H1 (cell line): ENCODE measurements at regions of chr22 and their contacts with region 1.

Region 1: GRCh38 chr22:28051787-28052356 is 132.8 kb upstream of the PITPNB start:
- DNase-seq: peak; percentile 44 to 92
- H3K4me3 ChIP-seq: no peak overlapping the region
- H3K27ac ChIP-seq: no peak overlapping the region
- H3K4me1 ChIP-seq: peaks cover 0 to 5% (median 1%) of the 10 kb centered on the region in 4 experiments; a peak in 2 of 7 replicates
- H3K27me3 ChIP-seq: no peaks in the 10 kb centered on the region
- CTCF ChIP-seq: peak; percentile 81 to 84 (median 82)
- EP300 ChIP-seq: no peak
- POLR2A ChIP-seq: no peak
- RAD21 ChIP-seq: peak; percentile 93 to 96

Region 2: DNA sequence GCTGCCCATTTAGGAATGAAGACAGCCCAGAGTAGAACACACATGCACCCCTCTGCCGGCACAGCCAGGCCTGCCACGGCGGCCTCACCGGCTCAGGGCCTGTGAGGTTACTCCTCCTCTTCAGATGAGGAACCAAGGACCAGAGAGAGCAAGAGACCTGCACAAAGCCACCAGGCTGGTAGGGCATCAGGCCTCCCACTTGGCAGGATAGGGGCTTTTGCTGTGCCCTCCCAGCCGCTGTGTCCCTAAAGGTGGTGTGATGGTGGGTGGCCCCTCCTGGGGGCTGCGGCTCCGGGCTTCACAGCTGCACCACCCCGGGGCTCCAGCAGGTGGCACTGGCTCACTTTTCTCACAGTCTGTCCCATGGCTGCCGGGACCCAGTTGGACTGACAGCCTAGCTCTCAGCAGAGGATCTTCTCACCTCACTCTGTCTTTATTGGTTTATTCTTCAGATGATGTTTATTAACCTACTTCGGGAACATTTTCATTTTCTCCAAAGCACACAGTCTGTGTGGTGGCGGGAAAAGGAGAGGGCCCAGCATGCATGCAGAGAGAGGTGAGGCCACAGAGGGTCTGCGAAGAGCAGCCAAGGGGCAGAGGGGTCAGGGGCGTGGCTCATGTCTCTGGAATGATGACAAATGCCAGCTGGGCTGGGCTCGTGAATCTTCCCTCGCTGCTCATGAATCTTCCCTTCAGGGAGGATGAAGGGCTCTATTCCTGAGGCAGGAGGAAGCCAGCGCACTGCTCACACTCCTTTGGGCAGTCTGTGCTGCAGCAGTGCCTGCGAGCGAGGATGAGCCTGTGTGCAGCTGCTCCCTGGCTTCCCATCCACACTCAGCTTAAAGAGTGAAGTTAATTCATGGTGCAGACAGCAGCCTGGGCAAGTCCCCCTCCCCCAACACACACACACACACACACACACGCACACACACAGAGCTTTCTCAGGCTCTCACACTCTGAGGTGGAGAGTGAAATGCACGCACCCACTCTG is 31.7 kb before region 1 on chr22:
- CTCF ChIA-PET with region 1: interaction called, 48 read pairs
- POLR2A ChIA-PET with region 1: no interaction called
- DNase-seq: peak; percentile 34 to 97
- H3K4me3 ChIP-seq: no peak overlapping the region
- H3K27ac ChIP-seq: no peak overlapping the region
- H3K4me1 ChIP-seq: peaks cover 0 to 6% (median under 1%) of the 10 kb centered on the region in 4 experiments; a peak in 3 of 7 replicates
- H3K27me3 ChIP-seq: no peaks in the 10 kb centered on the region
- CTCF ChIP-seq: peak; percentile 85 to 92 (median 88)
- EP300 ChIP-seq: no peak
- POLR2A ChIP-seq: no peak
- RAD21 ChIP-seq: peak; percentile 87 to 93

Region 3: DNA sequence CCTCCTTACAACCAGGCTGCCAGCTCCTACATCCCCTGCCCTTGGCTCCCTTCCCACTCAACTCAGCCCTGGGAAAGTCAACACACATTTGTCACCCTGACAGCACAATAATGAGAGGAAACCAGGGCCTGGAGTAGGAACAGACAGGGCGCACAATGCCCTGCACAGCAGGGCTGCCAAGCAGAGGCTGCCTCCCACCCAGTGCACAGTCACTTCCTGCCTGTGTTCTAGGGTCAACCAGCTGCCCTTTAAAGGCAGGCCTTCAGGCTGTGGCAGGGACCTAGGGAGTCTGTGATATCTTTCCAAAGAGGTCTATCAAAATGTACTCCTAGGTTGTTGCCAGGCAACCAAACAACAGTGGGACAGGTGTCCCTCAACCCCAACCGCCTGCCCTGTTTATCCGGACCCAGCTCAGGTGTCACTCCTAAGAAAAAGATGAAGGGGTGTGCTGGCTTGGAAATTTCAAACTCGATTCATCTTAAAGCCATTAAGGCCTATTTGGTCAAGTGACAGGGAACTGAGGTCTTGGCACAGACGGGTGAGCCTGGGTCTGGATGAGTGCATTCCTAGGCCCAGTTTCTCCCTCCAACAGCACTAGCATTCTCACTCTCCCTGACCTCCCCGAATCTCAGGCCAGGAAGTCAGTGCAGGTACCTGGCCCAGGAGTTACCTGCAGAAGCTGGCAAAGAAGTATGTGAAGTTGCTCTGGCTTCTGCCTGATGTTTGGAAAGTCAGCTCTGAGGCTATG is 22.5 kb before region 1 on chr22:
- CTCF ChIA-PET with region 1: interaction called, 13 read pairs
- POLR2A ChIA-PET with region 1: no interaction called
- DNase-seq: peak in 1 of 2 experiments; percentile 30
- H3K4me3 ChIP-seq: no peak overlapping the region
- H3K27ac ChIP-seq: no peak overlapping the region
- H3K4me1 ChIP-seq: no peaks in the 10 kb centered on the region
- H3K27me3 ChIP-seq: no peaks in the 10 kb centered on the region
- CTCF ChIP-seq: no peak
- EP300 ChIP-seq: no peak
- POLR2A ChIP-seq: no peak
- RAD21 ChIP-seq: no peak

Region 4: DNA sequence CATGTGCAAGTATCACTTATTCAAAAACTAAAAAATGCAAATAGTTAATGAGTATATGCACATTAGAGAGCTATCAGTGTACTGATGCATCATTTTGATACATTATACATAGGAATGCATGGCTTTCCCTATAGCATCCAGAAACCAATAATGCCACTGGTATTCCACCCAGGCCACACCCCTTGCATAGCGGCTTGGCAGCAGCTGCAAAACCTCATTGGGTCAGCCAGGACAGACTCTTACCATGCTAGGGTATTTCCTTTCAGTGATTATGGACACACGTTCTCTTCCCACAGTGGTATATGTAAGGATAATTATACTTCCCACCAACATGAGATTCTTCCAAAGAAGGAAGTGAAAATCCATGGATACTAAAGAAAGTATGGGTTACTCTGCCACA is 13.0 kb after region 1 on chr22:
- CTCF ChIA-PET with region 1: interaction called, 21 read pairs
- POLR2A ChIA-PET with region 1: no interaction called
- DNase-seq: no peak
- H3K4me3 ChIP-seq: no peak overlapping the region
- H3K27ac ChIP-seq: no peak overlapping the region
- H3K4me1 ChIP-seq: no peaks in the 10 kb centered on the region
- H3K27me3 ChIP-seq: no peaks in the 10 kb centered on the region
- CTCF ChIP-seq: no peak
- EP300 ChIP-seq: no peak
- POLR2A ChIP-seq: no peak
- RAD21 ChIP-seq: no peak

Region 5: DNA sequence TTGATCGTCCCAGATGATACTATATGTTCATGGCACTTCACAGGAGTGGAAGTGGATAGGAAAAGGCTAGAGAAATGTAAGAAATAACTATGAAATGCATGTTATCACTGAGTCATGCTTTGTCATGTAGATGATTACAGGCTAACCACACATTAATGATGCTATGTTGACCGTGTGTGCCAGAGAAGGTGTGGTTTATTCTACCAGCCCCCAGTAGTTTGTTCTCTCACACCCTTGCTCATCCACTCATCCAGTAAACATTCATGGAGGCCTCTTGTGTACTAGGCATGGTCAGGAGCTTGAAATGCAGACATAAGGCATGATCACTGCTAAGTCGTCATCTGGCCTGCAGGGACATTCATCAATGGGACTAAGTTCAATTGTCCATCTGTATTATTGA is 20.2 kb after region 1 on chr22:
- CTCF ChIA-PET with region 1: interaction called, 11 read pairs
- POLR2A ChIA-PET with region 1: no interaction called
- DNase-seq: no peak
- H3K4me3 ChIP-seq: no peak overlapping the region
- H3K27ac ChIP-seq: no peak overlapping the region
- H3K4me1 ChIP-seq: no peaks in the 10 kb centered on the region
- H3K27me3 ChIP-seq: no peaks in the 10 kb centered on the region
- CTCF ChIP-seq: no peak
- EP300 ChIP-seq: no peak
- POLR2A ChIP-seq: no peak
- RAD21 ChIP-seq: no peak

Region 6: DNA sequence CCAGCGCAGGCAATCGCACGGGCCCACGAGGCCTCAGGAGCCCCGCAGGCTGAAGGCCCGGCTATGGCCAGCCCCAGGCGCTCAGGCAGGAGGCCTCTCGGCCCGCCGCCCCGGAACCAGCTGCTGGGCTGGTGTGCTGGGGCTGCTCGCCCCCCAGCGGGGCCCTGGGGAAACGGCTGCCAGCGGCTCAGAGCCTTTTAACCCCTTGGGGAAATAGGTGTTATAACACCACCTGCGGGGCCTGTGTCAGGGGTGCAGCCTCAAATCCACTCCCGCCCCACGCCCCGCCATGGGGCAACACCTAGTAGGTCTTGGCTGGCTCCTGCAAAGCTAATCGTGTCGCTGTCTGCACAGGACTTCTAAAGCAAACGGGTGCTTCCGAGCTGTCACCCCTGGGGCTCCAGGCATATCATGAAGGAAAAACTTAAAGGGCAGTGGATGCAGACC is 390.4 kb after region 1 on chr22:
- CTCF ChIA-PET with region 1: interaction called, 51 read pairs
- POLR2A ChIA-PET with region 1: no interaction called
- DNase-seq: peak; percentile 69 to 85
- H3K4me3 ChIP-seq: peak overlapping the region; percentile 64 to 75 (median 72)
- H3K27ac ChIP-seq: no peak overlapping the region
- H3K4me1 ChIP-seq: peaks cover 0 to 3% (median 1%) of the 10 kb centered on the region in 4 experiments; a peak in 2 of 7 replicates
- H3K27me3 ChIP-seq: no peaks in the 10 kb centered on the region; a peak in 1 of 7 replicates
- CTCF ChIP-seq: peak; percentile 74 to 98 (median 77)
- EP300 ChIP-seq: peak in 1 of 2 experiments; percentile 38; a peak in 1 of 3 replicates
- POLR2A ChIP-seq: peak in 1 of 2 experiments; percentile 31; a peak in 1 of 3 replicates
- RAD21 ChIP-seq: peak; percentile 90 to 95

Region 7: GRCh38 chr22:28594797-28595462 is 543.1 kb after region 1 on chr22:
- CTCF ChIA-PET with region 1: interaction called, 16 read pairs
- POLR2A ChIA-PET with region 1: no interaction called
- DNase-seq: no peak
- H3K4me3 ChIP-seq: no peak overlapping the region
- H3K27ac ChIP-seq: no peak overlapping the region
- H3K4me1 ChIP-seq: no peaks in the 10 kb centered on the region
- H3K27me3 ChIP-seq: no peaks in the 10 kb centered on the region
- CTCF ChIP-seq: peak in 2 of 3 experiments; percentile 50 to 68; a peak in 2 of 4 replicates
- EP300 ChIP-seq: no peak
- POLR2A ChIP-seq: no peak
- RAD21 ChIP-seq: peak; percentile 89 to 91